GM10248 (cell line): ENCODE measurements at regions of chr1 and their contacts with region 1.

Region 1: DNA sequence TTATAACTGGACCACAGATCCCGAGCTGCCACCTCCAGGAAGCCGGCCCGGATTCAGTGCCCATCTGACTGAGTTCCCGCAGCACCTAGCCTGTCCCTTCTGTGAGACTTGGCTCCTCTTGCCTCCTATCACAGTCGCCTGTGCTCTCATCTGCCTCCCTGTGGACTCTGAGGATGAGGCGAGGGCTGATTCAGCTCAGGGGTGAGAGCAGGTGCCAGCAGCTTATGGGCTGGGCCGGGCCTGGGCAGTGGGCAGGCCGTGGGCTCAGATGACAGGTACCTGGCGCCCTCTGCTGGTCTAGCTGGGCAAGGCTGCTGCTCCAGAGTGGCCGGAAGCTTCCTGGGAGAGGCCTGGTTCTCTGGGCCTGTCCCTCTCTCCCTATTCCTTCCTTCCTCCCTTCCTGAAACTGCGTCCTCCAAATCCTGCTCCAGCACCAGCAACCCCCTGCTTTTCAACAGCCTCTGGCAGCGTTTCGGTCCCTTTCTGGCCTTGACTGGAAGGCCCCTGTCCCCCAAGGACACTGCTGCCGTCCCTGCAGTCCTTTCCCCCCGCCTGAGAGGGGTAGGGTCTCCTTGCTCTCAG is 17.3 kb upstream of the PCSK9 start:
- DNase-seq: peak; percentile 85
- CTCF ChIP-seq: peak; percentile 91

Region 2: GRCh38 chr1:55007625-55008024 is 14.4 kb before region 1 on chr1:
- CTCF ChIA-PET with region 1: interaction called, 12 read pairs
- POLR2A ChIA-PET with region 1: no interaction called
- DNase-seq: no peak
- CTCF ChIP-seq: no peak

Region 3: GRCh38 chr1:55035904-55036303 is 13.8 kb after region 1 on chr1:
- CTCF ChIA-PET with region 1: interaction called, 29 read pairs
- POLR2A ChIA-PET with region 1: no interaction called
- DNase-seq: no peak
- CTCF ChIP-seq: no peak

Region 4: GRCh38 chr1:55071477-55071876 is 49.4 kb after region 1 on chr1:
- CTCF ChIA-PET with region 1: no interaction called
- POLR2A ChIA-PET with region 1: no interaction called
- DNase-seq: no peak
- CTCF ChIP-seq: peak; percentile 44